Calu3 (cell line): ENCODE measurements at regions of chr10 and their contacts with region 1.

Region 1: DNA sequence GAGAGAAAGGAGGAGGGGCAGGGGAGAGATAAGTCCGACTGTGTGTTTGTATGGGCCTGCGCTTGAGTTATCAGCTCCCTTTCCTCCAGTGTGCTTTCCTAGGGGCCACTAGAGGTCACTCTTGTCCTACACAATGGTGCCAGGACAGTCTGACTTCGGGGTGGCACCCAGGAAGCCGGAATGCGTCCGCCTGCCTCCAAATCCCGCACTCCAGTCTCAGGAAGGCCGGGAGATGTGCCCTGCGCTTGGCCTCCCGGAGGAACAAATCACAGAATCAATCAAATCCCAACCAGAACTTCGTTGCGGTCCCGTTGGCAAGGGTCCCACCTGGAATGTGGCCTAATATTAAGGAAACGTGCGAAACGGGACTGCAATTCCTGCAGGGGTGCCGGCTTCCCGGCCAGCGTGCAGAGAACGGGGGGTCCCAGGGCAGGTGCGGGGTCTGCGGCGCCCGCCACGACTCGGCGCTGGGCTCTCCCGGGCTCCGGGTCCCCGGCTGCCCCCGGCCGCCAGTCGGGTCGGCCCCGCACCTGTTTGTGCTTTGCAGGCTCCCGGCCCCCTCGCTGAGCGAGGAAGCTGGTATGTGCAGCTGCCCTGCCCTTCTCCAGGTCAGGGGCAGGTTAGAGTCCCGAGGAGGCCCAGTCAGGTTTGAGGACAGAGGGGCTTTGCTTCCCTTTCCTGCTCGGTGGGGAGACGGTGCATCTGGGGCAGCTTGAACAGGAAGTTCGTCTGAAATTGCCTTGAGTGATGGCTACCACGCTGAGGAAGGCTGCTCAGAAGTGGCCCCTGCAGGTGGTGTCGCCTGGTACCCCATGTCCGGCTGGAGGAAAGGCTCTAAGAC is 21.0 kb upstream of the HPS1 start:
- DNase-seq: peak; percentile 67
- H3K4me3 Mint-ChIP-seq: peak overlapping the region; percentile 72
- H3K27ac Mint-ChIP-seq: no peak overlapping the region
- H3K4me1 Mint-ChIP-seq: no peaks in the 10 kb centered on the region
- H3K27me3 Mint-ChIP-seq: no peaks in the 10 kb centered on the region
- CTCF ChIP-seq: peak; percentile 62

Region 2: DNA sequence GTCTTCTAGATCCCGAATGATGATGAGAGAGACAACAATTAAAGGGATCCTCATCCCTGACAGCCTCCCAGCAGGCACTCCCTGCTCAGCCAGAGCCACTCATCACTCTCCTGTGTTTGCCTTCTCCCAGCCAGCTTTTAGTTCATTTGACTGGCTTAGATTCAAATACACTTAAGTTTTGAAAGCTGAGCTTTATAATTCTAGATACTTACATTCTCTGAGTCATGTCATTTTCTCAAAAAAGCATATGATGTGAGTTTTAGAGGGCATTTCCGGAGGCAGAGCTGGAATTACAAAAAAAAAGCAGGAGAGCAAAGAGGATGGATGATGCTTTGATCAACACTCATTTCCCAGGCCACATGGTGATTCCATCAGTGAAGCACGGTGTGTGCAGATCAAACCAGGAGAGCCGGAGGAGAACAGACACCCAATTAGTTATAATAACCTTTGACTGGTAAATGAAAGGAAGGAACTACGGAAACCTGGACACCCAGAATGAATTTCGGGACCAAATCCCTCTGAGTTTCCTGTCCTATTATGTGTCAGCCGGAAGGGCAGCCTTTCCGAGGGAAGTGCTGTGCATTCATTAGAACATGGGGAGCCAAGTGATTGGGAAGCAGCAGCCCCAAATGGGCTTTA is 60.6 kb after region 1 on chr10:
- CTCF ChIA-PET with region 1: no interaction called
- intact Hi-C with region 1: no loop called
- DNase-seq: no peak
- H3K4me3 Mint-ChIP-seq: no peak overlapping the region
- H3K27ac Mint-ChIP-seq: no peak overlapping the region
- H3K4me1 Mint-ChIP-seq: no peaks in the 10 kb centered on the region
- H3K27me3 Mint-ChIP-seq: no peaks in the 10 kb centered on the region
- CTCF ChIP-seq: no peak

Region 3: GRCh38 chr10:98664331-98665042 is 196.8 kb after region 1 on chr10:
- CTCF ChIA-PET with region 1: no interaction called
- intact Hi-C with region 1: loop called (anchors 1 kb)
- DNase-seq: peak; percentile 0
- H3K4me3 Mint-ChIP-seq: no peak overlapping the region
- H3K27ac Mint-ChIP-seq: no peak overlapping the region
- H3K4me1 Mint-ChIP-seq: no peaks in the 10 kb centered on the region
- H3K27me3 Mint-ChIP-seq: peaks cover 15% of the 10 kb centered on the region
- CTCF ChIP-seq: no peak

Region 4: DNA sequence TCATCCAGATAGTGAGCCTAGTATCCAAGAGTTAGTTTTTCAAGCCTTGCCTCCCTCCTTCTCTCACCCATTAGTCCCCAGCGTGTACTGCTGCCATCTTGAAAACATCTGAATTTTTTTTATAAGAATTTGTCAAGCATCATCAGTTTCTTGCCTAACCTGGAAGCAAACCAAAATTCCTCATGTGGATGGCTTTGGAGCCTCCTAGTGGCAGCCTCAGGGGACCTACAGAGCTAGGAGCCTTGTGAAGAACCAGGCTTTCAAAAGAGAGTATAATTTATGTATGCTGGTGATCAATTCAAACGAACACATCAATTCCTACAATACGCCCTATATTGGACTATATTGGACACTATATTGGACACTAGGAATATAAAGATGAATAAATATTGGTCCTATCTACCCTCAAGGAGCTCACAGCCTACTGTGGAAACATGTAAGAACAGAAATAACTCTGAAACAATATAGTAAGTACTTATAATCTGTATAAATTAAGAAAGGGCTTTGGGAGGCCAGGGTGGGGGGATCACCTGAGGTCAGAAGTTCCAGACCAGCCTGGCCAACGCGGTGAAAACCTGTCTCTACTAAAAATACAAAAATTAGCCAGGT is 704.5 kb after region 1 on chr10:
- CTCF ChIA-PET with region 1: interaction called, 7 read pairs
- intact Hi-C with region 1: loop called (anchors 5 kb)
- DNase-seq: peak; percentile 35
- H3K4me3 Mint-ChIP-seq: no peak overlapping the region
- H3K27ac Mint-ChIP-seq: no peak overlapping the region
- H3K4me1 Mint-ChIP-seq: no peaks in the 10 kb centered on the region
- H3K27me3 Mint-ChIP-seq: peaks cover 20% of the 10 kb centered on the region
- CTCF ChIP-seq: peak; percentile 45

Region 5: GRCh38 chr10:99248824-99249223 is 781.1 kb after region 1 on chr10:
- CTCF ChIA-PET with region 1: interaction called, 24 read pairs
- intact Hi-C with region 1: loop called (anchors 2 kb)
- DNase-seq: no peak
- H3K4me3 Mint-ChIP-seq: no peak overlapping the region
- H3K27ac Mint-ChIP-seq: no peak overlapping the region
- H3K4me1 Mint-ChIP-seq: no peaks in the 10 kb centered on the region
- H3K27me3 Mint-ChIP-seq: peaks cover 13% of the 10 kb centered on the region
- CTCF ChIP-seq: no peak